Endothelial cell of umbilical vein (primary cell): ENCODE measurements at regions of chr9 and their contacts with region 1.

Region 1: GRCh38 chr9:68836788-68837187 is 131.7 kb downstream of the PIP5K1B start:
- DNase-seq: no peak
- H3K4me3 ChIP-seq: no peak overlapping the region
- H3K27ac ChIP-seq: no peak overlapping the region
- H3K4me1 ChIP-seq: no peaks in the 10 kb centered on the region
- H3K27me3 ChIP-seq: no peaks in the 10 kb centered on the region
- CTCF ChIP-seq: no peak
- POLR2A ChIP-seq: no peak

Region 2: DNA sequence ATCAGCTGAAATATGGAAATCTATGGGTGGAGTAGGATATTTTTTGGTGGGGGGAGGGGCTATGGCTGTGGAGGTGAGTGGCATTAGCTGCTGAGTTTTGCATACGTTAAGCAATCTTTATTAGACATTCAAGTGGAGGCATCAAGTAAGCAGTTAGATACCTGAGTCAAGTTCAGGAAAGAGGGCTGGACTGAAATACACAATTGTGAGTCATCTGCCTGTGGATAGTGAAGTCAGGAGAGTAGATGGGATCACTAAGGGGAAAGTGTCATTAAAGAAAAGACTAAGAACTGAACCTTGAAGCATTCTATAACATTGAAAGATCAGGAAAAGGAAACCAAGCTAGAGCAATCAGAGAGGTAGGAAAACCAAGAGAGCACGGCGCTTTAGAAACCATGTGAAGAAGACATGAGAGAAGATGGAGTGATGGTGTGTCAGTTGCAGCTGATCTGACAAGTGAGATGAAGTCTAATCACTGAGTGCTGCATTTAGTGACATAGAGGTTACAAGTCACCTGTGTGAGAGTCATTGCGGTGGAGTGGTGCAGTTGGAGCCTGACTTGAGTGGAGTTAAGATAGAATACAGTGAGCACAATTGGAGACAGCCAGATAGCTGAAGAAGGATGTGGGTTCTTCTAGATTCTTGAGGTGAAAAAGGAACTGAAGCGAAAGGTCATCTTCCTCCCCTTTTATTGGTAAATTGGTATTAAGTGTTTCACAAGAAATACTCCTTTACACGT is 43.0 kb before region 1 on chr9:
- CTCF ChIA-PET with region 1: no interaction called
- POLR2A ChIA-PET with region 1: no interaction called
- dilution Hi-C with region 1: no loop called
- intact Hi-C with region 1: loop called (anchors 5 kb)
- DNase-seq: no peak
- H3K4me3 ChIP-seq: no peak overlapping the region
- H3K27ac ChIP-seq: no peak overlapping the region
- H3K4me1 ChIP-seq: no peaks in the 10 kb centered on the region
- H3K27me3 ChIP-seq: peaks cover 23 to 33% of the 10 kb centered on the region in 2 experiments
- CTCF ChIP-seq: no peak
- POLR2A ChIP-seq: no peak

Region 3: DNA sequence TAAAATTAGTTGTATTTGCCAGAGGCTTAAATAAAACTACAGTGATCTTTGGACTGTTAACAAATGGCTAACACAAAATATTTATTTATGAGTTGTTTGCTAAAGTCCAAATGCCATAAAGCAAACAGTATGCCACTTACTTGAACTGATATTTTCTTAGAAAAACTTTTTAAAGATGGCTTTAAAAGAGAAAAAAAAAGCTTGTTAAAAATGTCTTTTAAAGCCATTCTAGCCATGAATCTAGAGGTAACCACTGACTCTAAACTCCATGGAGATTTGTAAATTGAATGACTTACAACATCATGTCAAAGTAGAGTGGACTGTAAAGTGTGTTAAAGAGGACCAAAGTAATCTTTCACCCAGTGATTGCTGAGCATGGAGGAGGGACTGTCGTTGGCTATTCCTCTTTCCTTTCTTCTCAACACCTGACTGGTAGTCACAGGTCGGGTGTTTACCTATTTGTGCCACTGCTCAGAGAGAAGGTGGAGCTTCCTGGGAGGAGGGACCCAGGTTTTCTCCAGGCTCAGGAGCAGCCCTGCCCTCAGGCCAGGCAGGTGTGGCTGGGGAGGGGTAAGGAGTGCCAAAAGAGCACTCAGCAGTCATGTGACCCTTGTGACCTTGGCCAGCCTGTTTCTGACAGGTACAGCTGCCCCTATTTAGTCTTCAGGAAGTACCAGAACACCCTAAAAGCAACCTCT is 268.2 kb after region 1 on chr9:
- CTCF ChIA-PET with region 1: no interaction called
- POLR2A ChIA-PET with region 1: no interaction called
- dilution Hi-C with region 1: no loop called
- intact Hi-C with region 1: loop called (anchors 5 kb)
- DNase-seq: no peak
- H3K4me3 ChIP-seq: no peak overlapping the region
- H3K27ac ChIP-seq: no peak overlapping the region
- H3K4me1 ChIP-seq: no peaks in the 10 kb centered on the region
- H3K27me3 ChIP-seq: no peaks in the 10 kb centered on the region
- CTCF ChIP-seq: no peak
- POLR2A ChIP-seq: no peak